GM13977 (cell line): ENCODE measurements at regions of chr15 and their contacts with region 1.

Region 1: GRCh38 chr15:84947947-84948830 is 33.5 kb upstream of the PDE8A start:
- DNase-seq: no peak
- CTCF ChIP-seq: no peak

Region 2: DNA sequence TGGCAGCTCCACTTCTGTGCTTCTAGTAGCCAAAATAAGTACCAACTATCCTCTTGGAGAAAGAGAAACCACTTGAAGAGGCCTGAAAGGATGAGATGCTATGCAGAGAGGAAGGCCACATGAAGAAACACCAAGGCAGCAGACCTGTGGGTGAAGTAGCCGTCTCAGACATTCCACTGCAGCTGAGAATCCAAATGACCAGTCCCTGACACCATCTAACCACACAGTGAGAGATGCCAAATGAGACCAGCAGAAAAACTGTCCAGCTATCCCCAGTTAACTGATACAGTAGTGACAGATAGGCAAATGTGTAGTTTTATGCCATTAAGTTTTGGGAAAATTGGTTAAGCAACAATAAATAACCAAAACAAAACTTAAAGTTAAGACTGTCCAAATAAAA is 395.3 kb before region 1 on chr15:
- in situ Hi-C with region 1: no loop called
- DNase-seq: no peak
- CTCF ChIP-seq: no peak

Region 3: GRCh38 chr15:85044251-85044853 is 96.2 kb after region 1 on chr15:
- in situ Hi-C with region 1: loop called (anchors 10 kb)
- DNase-seq: peak; percentile 34
- CTCF ChIP-seq: peak; percentile 69